Activated CD4-positive, alpha-beta memory T cell treated with anti-CD3 and anti-CD28 coated beads for 36 hours (primary cell): ENCODE measurements at regions of chr4 and their contacts with region 1.

Region 1: GRCh38 chr4:122632396-122633143 is 11.7 kb upstream of the IL21 start:
- DNase-seq: no peak
- H3K4me3 Mint-ChIP-seq: peak overlapping the region; percentile 21
- H3K27ac Mint-ChIP-seq: peak overlapping the region; percentile 55
- H3K4me1 Mint-ChIP-seq: peaks cover 62% of the 10 kb centered on the region
- H3K27me3 Mint-ChIP-seq: no peaks in the 10 kb centered on the region

Region 2: GRCh38 chr4:122617597-122618593 is 14.7 kb before region 1 on chr4:
- CTCF ChIA-PET with region 1: interaction called, 8 read pairs
- POLR2A ChIA-PET with region 1: interaction called, 9 read pairs
- intact Hi-C with region 1: loop called (anchors 1 kb)
- DNase-seq: no peak
- H3K4me3 Mint-ChIP-seq: peak overlapping the region; percentile 76
- H3K27ac Mint-ChIP-seq: peak overlapping the region; percentile 87
- H3K4me1 Mint-ChIP-seq: peaks cover 70% of the 10 kb centered on the region
- H3K27me3 Mint-ChIP-seq: no peaks in the 10 kb centered on the region

Region 3: GRCh38 chr4:122700178-122700725 is 67.7 kb after region 1 on chr4:
- CTCF ChIA-PET with region 1: no interaction called
- POLR2A ChIA-PET with region 1: interaction called, 4 read pairs
- intact Hi-C with region 1: loop called (anchors 1 kb)
- DNase-seq: peak; percentile 15
- H3K4me3 Mint-ChIP-seq: peak overlapping the region; percentile 64
- H3K27ac Mint-ChIP-seq: peak overlapping the region; percentile 92
- H3K4me1 Mint-ChIP-seq: peaks cover 48% of the 10 kb centered on the region
- H3K27me3 Mint-ChIP-seq: peaks cover 5% of the 10 kb centered on the region